ENCODE measurements at regions of chr1 and their contacts with region 1.

Region 1: DNA sequence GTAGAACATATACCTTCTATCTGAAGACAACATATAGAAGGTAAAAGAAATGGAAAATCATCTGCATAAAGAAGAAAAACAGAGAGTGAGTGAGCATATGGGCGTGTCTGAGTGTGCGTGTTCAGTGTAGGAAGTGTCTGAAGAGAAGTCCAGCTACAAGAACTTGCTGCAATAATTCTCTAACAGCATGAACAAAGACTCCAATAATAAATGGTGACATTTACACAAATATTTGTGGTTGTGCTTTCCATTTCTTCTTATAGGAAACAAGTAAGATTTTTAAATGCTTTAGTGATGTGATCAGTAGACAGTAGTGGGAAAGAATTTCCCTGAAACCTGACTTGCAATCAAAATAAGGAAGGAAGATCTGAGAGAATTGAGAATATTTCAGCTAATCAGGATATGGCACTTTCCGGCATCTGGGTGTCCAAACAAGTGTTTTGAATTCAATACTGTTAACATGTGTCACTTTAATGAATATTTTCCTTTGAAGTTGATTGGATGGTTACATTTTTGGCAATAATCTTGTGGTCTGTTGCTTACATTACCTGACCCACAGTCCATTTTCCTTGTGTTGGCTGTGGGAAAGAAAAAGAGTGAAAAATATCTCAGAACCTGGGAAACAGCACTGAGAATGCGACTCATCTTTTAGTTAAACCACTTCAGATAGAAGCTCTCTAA is 154.0 kb downstream of the TGFB2 start:
- DNase-seq: no peak
- ATAC-seq: peak; percentile 37
- H3K4me3 ChIP-seq: peak overlapping the region; percentile 22 to 61
- H3K27ac ChIP-seq: peak overlapping the region; percentile 61 to 80
- H3K4me1 ChIP-seq: peaks cover 6 to 9% of the 10 kb centered on the region in 2 donors
- H3K27me3 ChIP-seq: no peaks in the 10 kb centered on the region

Region 2: DNA sequence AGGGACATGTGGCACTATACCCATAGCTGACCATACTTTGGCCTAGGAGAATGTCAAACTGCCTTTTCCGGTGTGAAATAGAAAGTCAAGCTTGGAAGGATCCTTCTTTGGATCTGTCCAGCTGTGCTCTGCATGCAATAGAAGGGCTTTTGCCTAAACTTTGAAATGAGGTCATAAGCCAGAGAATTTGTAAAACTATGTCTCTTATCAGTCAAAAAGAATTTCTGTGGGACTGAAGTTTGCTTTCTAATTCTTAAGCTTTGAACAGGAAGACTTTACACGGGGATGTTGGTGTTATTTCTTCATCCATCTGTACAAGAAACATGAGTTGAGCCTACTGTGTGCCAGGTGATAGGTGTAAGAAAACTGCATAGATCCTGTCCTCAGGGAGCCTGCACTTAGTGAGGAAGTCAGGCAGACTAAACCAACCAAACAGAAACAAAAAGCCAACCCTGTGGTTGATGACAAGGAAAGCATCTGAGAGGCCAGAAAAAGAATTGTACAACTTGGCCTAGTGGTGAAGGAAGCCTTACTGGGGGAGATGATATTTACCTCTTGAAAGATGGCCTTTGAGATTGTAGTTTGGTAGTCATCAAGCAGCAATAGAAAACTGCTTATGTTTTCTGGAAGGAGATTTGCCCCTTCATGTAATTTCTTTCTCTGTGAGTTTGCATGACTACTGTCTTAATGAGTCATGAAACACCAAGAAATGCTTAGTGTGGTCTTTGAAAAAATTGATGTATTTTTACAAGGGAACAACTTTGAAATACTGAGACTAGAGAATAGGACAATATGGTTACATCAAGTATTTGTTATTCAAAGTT is 129.3 kb before region 1 on chr1:
- intact Hi-C with region 1: loop called in 1 of 2 experiments (anchors 5 kb)
- DNase-seq: no peak
- ATAC-seq: peak; percentile 26
- H3K4me3 ChIP-seq: no peak overlapping the region
- H3K27ac ChIP-seq: peak overlapping the region; percentile 89 to 97
- H3K4me1 ChIP-seq: peaks cover 5 to 9% of the 10 kb centered on the region in 2 donors
- H3K27me3 ChIP-seq: no peaks in the 10 kb centered on the region

Region 3: GRCh38 chr1:218459878-218460711 is 39.1 kb before region 1 on chr1:
- intact Hi-C with region 1: loop called in 1 of 2 experiments (anchors 5 kb)
- DNase-seq: peak in 1 of 2 donors; percentile 62
- ATAC-seq: peak; percentile 89
- H3K4me3 ChIP-seq: no peak overlapping the region
- H3K27ac ChIP-seq: peak overlapping the region; percentile 81 to 100
- H3K4me1 ChIP-seq: peaks cover 2 to 4% of the 10 kb centered on the region in 2 donors
- H3K27me3 ChIP-seq: no peaks in the 10 kb centered on the region

Region 4: GRCh38 chr1:218521375-218522169 is 22.4 kb after region 1 on chr1:
- intact Hi-C with region 1: no loop called
- DNase-seq: peak in 1 of 2 donors; percentile 63
- ATAC-seq: peak; percentile 71
- H3K4me3 ChIP-seq: no peak overlapping the region
- H3K27ac ChIP-seq: no peak overlapping the region
- H3K4me1 ChIP-seq: no peaks in the 10 kb centered on the region
- H3K27me3 ChIP-seq: no peaks in the 10 kb centered on the region

Region 5: DNA sequence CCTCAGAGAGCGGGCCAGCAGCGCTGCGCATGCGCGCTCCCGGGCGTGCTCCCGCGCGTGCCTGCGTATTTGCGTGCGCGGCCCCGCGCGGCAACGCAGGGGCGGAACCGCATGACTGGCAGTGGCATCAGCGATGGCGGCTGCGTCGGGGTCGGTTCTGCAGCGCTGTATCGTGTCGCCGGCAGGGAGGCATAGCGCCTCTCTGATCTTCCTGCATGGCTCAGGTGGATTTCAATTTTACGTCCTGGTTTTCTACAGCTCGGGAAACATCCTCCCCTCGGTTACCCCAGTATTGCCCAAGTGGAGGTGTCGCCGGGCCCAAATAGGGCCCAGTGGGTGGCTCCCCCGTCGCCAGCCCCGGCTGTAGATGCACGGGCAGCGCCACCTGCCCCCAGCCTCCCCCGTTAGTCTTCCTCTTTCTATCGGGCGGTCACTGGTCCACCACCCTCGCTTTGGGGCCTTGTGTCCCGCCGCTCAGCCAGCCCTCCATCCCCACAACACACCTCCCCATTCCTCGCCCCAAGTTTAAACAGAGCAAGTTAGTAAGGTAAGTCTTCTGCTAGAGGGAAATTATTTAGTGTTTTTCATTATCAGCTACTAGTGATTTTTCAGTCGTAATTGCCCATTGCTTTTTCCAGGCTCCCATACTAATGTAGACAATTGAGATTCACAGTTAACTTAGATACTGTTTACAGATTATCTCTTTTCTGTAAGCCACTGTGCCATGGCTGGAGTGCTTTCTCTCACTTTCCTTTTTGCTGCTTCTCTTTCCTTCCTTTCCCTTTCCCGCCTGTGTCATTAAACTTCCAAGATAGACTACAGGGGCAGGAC is 674.8 kb after region 1 on chr1 and contains the start of gene LYPLAL1:
- intact Hi-C with region 1: loop called in 1 of 2 experiments (anchors 10 kb)
- DNase-seq: peak; percentile 94 to 97
- ATAC-seq: peak; percentile 97
- H3K4me3 ChIP-seq: peak within 1 kb of the TSS; percentile 36 to 66
- H3K27ac ChIP-seq: peak within 1 kb of the TSS; percentile 73 to 79
- H3K4me1 ChIP-seq: peaks cover 4 to 10% of the 10 kb centered on the region in 2 donors
- H3K27me3 ChIP-seq: no peaks in the 10 kb centered on the region
- total RNA-seq, gene LYPLAL1: 35.1 to 47.0 TPM